A673 (cell line): ENCODE measurements at regions of chr2 and their contacts with region 1.

Region 1: DNA sequence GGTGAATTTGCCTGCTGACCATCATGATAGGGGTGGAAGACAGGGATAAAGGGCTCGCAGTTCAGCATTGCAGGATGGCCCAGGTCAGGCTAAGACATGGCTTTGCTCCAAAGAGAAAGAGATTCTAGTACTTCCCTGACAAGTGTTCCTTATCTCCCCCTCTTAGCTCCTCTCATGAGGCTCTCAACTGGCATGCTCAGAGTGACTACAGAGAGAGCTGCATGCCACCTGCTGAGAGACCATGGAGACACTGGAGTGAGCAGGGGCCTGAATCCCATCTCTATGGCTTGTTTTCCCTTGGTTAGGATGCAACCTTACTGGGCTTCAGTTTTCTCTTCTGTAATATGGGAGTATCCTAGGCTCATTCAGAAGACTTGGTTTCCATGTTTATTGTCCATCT is 94.3 kb downstream of the ARHGAP15 start:
- DNase-seq: no peak
- H3K4me3 ChIP-seq: no peak overlapping the region
- H3K27ac ChIP-seq: no peak overlapping the region
- H3K4me1 ChIP-seq: no peaks in the 10 kb centered on the region
- H3K27me3 ChIP-seq: no peaks in the 10 kb centered on the region
- CTCF ChIP-seq: no peak

Region 2: DNA sequence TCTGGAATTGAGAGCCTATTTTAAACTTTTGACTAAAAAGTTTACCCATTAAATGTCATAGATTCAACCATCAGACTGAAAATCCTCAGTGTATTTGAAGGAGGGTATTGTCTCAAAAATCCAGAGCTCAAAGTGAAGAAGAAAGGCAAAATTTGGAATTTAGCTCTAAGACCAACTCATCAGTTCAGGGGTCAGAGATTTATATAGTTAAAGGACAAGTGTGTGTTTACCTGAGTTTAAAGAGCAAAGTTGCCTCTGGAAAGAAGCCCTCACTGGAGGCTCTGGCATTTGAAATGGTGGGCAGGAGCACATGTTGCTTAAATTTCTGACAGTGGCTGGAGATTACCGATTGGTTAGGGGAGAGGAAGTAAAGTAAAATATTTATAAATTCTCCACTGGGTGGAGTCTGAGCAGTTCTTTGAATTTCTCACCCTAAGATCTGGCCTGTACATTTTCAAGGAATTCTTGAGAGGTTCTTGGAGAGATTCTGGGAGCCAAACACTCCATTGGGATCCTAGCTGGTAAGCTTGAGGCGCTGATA is 346.3 kb before region 1 on chr2 and contains the start of gene KYNU:
- CTCF ChIA-PET with region 1: no interaction called
- POLR2A ChIA-PET with region 1: no interaction called
- intact Hi-C with region 1: no loop called
- DNase-seq: peak; percentile 39
- H3K4me3 ChIP-seq: no peak within 1 kb of the TSS
- H3K27ac ChIP-seq: no peak within 1 kb of the TSS
- H3K4me1 ChIP-seq: peaks cover 50% of the 10 kb centered on the region
- H3K27me3 ChIP-seq: no peaks in the 10 kb centered on the region
- CTCF ChIP-seq: 0 out of 2 replicates have a peak, but pooled peaks have one; percentile 18
- total RNA-seq, gene KYNU: 0.44 and 2.5 TPM in 2 replicates

Region 3: DNA sequence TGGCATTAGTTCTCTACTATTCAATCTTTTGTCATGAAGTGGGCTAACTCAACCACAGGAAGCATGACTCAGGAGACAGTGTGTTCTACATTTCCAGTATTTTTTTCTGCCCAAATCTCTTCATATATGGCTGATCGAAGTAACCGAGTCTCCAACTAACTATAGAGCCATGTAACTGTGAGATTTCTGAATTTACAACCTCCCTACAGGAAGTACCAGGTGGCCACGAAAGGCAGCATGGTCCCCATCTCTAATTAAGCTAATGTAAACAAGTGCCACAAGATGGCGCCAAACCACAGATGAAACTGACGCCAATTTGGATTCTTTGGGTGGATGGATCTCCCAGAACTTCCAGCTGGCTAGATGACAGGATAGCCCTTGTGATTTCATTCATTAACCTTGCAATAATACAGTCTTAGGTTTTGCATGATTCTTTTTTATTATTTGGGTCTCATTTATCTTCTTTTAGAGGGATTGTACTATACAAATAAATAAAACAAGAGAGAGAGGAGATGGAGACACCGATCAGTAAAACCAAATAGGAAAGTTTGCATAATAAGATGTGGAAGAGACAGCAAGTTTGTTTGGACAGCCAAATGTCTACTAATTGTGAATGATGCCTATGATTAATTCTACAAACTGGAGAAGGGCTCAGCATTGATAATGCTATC is 112.7 kb before region 1 on chr2:
- CTCF ChIA-PET with region 1: interaction called, 9 read pairs
- POLR2A ChIA-PET with region 1: no interaction called
- intact Hi-C with region 1: loop called (anchors 2 kb)
- DNase-seq: peak; percentile 88
- H3K4me3 ChIP-seq: no peak overlapping the region
- H3K27ac ChIP-seq: no peak overlapping the region
- H3K4me1 ChIP-seq: no peaks in the 10 kb centered on the region
- H3K27me3 ChIP-seq: no peaks in the 10 kb centered on the region
- CTCF ChIP-seq: peak; percentile 83

Region 4: GRCh38 chr2:143162123-143162837 is 61.3 kb before region 1 on chr2:
- CTCF ChIA-PET with region 1: interaction called, 5 read pairs
- POLR2A ChIA-PET with region 1: no interaction called
- intact Hi-C with region 1: loop called (anchors 2 kb)
- DNase-seq: peak; percentile 62
- H3K4me3 ChIP-seq: no peak overlapping the region
- H3K27ac ChIP-seq: no peak overlapping the region
- H3K4me1 ChIP-seq: no peaks in the 10 kb centered on the region
- H3K27me3 ChIP-seq: peaks cover 4% of the 10 kb centered on the region
- CTCF ChIP-seq: peak; percentile 75